ENCODE measurements at regions of chr2 and their contacts with region 1.

Region 1: GRCh38 chr2:126657636-126658318 is 1.8 kb downstream of the GYPC start:
- DNase-seq: peak; percentile 89
- H3K4me3 Mint-ChIP-seq: peak overlapping the region; percentile 91
- H3K27ac Mint-ChIP-seq: peak overlapping the region; percentile 97
- H3K4me1 Mint-ChIP-seq: peaks cover 52% of the 10 kb centered on the region
- H3K27me3 Mint-ChIP-seq: no peaks in the 10 kb centered on the region

Region 2: GRCh38 chr2:126761981-126762878 is 104.5 kb after region 1 on chr2:
- CTCF ChIA-PET with region 1: no interaction called
- POLR2A ChIA-PET with region 1: no interaction called
- intact Hi-C with region 1: loop called (anchors 5 kb)
- DNase-seq: peak; percentile 64
- H3K4me3 Mint-ChIP-seq: no peak overlapping the region
- H3K27ac Mint-ChIP-seq: peak overlapping the region; percentile 35
- H3K4me1 Mint-ChIP-seq: peaks cover 48% of the 10 kb centered on the region
- H3K27me3 Mint-ChIP-seq: no peaks in the 10 kb centered on the region

Region 3: DNA sequence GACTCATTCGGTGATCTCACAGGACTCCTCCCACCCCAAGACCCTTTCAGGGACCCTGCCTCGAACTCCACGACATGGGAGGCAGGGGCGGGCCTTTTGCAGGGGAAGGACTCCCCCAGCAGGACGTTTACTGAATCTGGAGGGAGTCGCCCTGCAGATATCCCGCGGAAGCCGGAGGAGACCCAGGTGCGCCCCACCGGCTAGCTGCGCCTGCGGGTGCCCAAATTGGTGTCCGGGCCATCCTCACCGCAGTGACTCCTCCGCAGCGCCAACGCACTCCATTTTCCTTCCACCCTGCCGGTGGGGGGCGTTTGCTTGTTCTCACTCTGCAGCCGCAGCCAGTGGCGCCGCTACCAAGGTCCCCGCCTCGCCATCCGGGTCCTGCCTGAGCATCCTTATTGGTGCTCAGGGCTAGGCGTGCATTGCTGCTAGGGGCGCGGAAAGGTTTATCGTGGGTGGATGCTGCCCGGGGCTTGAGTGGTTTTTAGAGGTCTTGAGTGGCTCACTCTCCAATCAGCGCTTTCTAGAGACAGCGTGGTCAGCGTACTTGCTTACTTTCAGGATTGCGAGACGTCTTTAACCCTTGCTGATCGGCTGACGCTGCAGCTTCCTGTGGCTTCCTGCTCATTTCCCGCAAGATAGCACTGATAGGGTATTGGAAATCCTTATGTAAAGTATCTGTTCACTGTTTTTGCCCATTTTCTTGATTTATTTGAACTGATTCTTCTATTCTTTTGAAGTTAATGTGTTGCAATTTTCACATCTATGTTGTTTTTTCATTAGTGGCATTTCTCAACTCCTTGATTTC is 367.8 kb after region 1 on chr2:
- CTCF ChIA-PET with region 1: no interaction called
- POLR2A ChIA-PET with region 1: no interaction called
- intact Hi-C with region 1: loop called (anchors 10 kb)
- DNase-seq: peak; percentile 86
- H3K4me3 Mint-ChIP-seq: peak overlapping the region; percentile 69
- H3K27ac Mint-ChIP-seq: no peak overlapping the region
- H3K4me1 Mint-ChIP-seq: peaks cover 15% of the 10 kb centered on the region
- H3K27me3 Mint-ChIP-seq: peaks cover 21% of the 10 kb centered on the region